A549 (cell line): ENCODE measurements at regions of chr1 and their contacts with region 1.

Region 1: DNA sequence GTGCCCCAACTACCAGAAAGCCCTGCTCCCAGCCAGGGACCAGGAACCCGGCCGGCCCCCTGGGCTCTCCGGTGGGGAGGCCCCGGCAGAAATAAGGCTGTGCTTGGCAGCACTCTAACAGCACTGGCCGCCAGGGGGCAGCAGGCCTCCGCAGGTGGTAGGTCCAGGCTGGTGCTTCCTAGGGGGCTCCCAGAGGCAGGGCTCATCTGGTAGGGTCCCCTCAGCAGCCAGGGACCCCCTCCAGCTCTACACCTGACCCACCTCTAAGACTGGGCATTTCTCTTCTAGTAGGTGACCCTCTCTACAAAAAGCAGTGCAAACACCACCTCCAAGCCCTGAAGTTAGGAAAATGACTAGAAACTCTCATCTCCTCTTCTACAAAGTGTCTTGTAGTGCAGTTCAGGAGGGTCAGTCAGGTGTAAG is 85.6 kb downstream of the STUM start:
- DNase-seq: peak; percentile 61 to 64
- ATAC-seq: peak; percentile 77 to 95
- H3K4me3 ChIP-seq: no peak overlapping the region
- H3K27ac ChIP-seq: no peak overlapping the region
- H3K4me1 ChIP-seq: no peaks in the 10 kb centered on the region
- CTCF ChIP-seq: peak; percentile 94
- EP300 ChIP-seq: no peak
- POLR2A ChIP-seq: no peak
- RAD21 ChIP-seq: peak; percentile 94 to 96

Region 2: DNA sequence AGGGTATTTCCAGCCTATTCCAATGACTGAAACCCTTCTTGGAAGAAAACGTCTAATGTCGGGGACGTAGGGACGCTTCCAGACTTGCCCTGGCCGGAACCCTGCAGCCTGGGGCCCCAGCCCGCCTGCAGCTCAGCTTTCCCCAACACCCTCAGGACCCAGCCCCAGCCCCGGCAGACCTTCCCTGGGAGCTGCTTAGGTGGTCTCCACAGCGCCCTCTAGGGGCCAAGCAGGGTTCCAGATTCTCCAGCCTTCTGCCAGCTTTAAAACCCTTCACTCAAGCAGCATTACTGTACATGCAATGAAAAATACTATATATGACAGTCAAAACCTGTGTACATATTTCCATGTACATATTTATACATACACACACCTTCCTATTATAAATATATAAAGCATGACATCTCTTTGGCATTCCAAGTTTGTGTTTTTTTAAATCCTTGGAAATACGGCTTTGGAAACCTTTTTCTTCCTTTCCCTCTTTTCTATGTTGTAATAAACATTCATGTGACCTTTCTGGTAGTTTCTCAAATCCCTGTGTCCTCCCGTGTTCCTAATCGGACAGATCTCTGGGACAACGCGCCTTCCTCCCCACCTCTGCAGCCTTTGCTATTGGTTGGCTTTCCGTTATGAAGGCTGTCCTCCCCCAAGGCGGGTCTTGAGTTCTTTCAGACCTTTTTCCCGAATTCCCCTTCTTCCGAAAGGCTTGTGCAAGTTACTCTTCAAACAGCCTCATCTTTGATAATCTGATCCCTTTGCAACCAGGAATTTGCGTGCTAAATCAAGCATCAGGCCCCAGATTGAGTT is 25.3 kb before region 1 on chr1:
- CTCF ChIA-PET with region 1: interaction called, 10 read pairs
- POLR2A ChIA-PET with region 1: no interaction called
- DNase-seq: peak; percentile 63 to 72
- ATAC-seq: peak; percentile 40 to 92; a peak in 4 of 6 replicates
- H3K4me3 ChIP-seq: no peak overlapping the region
- H3K27ac ChIP-seq: no peak overlapping the region
- H3K4me1 ChIP-seq: no peaks in the 10 kb centered on the region
- CTCF ChIP-seq: peak; percentile 73
- EP300 ChIP-seq: no peak
- POLR2A ChIP-seq: no peak
- RAD21 ChIP-seq: peak; percentile 38 to 52; a peak in 4 of 5 replicates

Region 3: GRCh38 chr1:226649780-226650179 is 15.6 kb after region 1 on chr1:
- CTCF ChIA-PET with region 1: interaction called, 18 read pairs
- POLR2A ChIA-PET with region 1: no interaction called
- DNase-seq: peak in 1 of 2 experiments; percentile 28
- ATAC-seq: peak in 1 of 2 experiments; percentile 19; a peak in 1 of 6 replicates
- H3K4me3 ChIP-seq: no peak overlapping the region
- H3K27ac ChIP-seq: no peak overlapping the region
- H3K4me1 ChIP-seq: no peaks in the 10 kb centered on the region
- CTCF ChIP-seq: peak; percentile 24; the same call in 1 of the 3 replicates
- EP300 ChIP-seq: no peak
- POLR2A ChIP-seq: no peak
- RAD21 ChIP-seq: peak in 1 of 2 experiments; percentile 33; a peak in 2 of 5 replicates

Region 4: DNA sequence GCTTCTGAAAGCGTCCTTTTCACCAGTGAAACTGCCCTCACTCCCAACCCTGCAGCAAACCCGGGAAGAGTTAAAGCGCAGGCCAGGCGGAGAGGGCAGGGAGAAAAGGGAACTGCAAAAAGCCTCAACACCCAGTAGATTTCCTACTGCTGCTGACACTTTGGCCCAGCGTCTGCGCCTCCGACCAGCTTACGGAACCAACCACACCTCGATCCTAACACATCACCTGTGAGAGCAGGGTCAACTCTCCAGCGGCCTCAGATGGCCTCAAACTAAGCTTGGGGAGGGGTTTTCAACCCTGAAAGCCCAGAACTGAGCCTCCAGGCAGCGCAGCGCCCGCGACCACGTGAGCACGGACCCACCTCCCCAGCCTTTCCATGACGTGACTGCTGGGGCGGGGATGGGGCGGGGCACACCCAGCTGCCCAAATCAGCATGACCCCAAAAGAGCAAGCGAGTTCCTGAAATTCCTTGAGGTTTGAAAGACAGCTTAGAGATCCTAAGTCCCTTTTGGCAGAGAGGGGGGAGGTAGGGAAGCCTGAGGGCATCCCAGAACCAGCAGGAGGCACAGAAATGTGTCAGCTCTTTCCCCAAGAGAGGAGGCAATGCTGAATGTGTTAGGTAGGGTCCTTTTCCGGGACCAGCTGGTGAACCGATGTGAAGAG is 45.8 kb after region 1 on chr1:
- CTCF ChIA-PET with region 1: interaction called, 12 read pairs
- POLR2A ChIA-PET with region 1: no interaction called
- DNase-seq: no peak
- ATAC-seq: no peak
- H3K4me3 ChIP-seq: no peak overlapping the region
- H3K27ac ChIP-seq: no peak overlapping the region
- H3K4me1 ChIP-seq: peaks cover 11% of the 10 kb centered on the region; the same call in 2 of the 3 replicates
- CTCF ChIP-seq: no peak
- EP300 ChIP-seq: no peak
- POLR2A ChIP-seq: no peak
- RAD21 ChIP-seq: no peak

Region 5: DNA sequence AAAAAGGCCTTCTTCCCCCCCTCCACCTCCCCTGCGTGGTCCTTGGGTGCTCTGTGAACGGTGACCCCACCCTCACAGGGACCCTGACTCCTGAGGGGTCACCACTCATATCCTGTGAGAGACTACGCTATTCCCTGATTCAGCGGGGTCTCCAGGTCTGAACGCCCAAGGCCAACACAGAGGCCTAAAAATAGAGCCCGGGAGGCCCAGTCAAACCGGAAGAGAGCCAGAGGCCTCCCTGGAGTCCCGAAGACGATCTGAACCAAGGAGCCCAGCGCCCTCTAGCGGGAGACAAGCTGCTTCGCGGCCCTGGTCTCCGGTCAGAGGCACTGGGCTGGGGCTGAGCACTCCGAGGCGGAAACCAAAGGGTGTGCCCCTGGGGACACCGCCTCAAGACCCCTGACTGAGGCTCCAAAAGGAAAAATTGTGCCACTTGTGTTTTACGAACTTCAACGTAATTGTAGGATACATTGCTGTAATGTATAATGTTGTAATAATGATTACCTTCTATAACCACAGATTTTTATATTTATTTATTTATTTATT is 193.9 kb after region 1 on chr1:
- CTCF ChIA-PET with region 1: interaction called, 127 read pairs
- POLR2A ChIA-PET with region 1: no interaction called
- DNase-seq: peak; percentile 94 to 95
- ATAC-seq: peak; percentile 99 to 100
- H3K4me3 ChIP-seq: no peak overlapping the region
- H3K27ac ChIP-seq: peak overlapping the region; percentile 58 to 80; a peak in 5 of 6 replicates
- H3K4me1 ChIP-seq: 0 out of 3 replicates have a peak, but pooled peaks cover 3% of the 10 kb centered on the region
- CTCF ChIP-seq: peak; percentile 87
- EP300 ChIP-seq: no peak
- POLR2A ChIP-seq: no peak
- RAD21 ChIP-seq: peak; percentile 91 to 97